ENCODE measurements at regions of chr17 and their contacts with region 1.

Region 1: GRCh38 chr17:17387830-17388441 is 84.8 kb downstream of the NT5M start:
- DNase-seq: no peak

Region 2: GRCh38 chr17:17216776-17217175 is 171.2 kb before region 1 on chr17:
- intact Hi-C with region 1: no loop called
- DNase-seq: no peak

Region 3: GRCh38 chr17:17322516-17323510 is 65.1 kb before region 1 on chr17:
- intact Hi-C with region 1: loop called (anchors 10 kb)
- DNase-seq: peak; percentile 64

Region 4: GRCh38 chr17:17363638-17364337 is 24.1 kb before region 1 on chr17:
- intact Hi-C with region 1: no loop called
- DNase-seq: peak; percentile 55

Region 5: DNA sequence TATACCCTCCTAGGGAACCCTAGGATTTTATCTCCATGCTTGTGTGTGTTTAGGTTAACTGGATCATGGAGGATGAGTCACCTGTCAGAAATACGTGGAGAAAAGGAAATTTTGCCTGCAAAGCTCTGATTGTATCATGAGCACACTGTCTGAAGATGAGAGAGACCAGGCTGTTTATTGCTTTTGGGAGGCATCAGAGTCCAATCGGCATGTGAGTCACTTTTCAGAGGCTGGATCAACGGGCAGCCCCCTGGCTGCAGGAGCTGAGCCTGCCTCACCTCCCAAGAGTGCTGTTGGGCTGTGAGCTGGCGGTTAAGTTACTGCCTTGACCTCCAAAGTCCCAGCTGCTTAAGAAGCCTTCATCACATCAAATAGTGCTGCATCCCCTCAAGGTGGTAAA is 47.4 kb after region 1 on chr17:
- intact Hi-C with region 1: no loop called
- DNase-seq: no peak

Region 6: DNA sequence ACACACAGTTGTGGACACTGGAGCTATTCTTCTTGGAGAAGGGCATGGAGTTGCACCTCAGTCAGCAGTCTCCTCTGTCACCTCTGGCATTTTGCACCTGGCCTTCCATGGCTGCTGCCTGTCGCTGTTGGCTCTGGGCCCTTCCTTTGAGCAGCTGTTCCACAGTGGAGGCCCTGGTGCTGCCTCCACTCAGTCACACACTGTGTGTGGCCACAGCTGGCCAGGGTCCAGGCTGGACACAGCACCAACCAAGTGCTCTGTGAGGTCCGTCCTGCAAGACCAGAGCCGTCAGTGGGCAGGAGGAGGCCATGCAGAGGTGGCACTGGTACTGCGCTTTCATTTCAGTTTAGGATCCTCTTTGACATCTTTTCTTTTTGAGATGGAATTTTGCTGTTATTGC is 67.2 kb after region 1 on chr17:
- intact Hi-C with region 1: loop called (anchors 10 kb)
- DNase-seq: no peak

Measured in cardiac septum (tissue), 1 donor.